GM12878 (cell line): ENCODE measurements at regions of chr2 and their contacts with region 1.

Region 1: GRCh38 chr2:119223521-119224390 is at the start of gene STEAP3:
- DNase-seq: no peak
- ATAC-seq: peak; percentile 93
- H3K4me3 ChIP-seq: peak within 1 kb of the TSS; percentile 82
- H3K27ac ChIP-seq: no peak within 1 kb of the TSS
- H3K4me1 ChIP-seq: peaks cover 3% of the 10 kb centered on the region; the same call in 1 of the 2 replicates
- H3K27me3 ChIP-seq: no peaks in the 10 kb centered on the region; a peak in 1 of 4 replicates
- CTCF ChIP-seq: peak in 1 of 3 experiments; percentile 13; a peak in 1 of 6 replicates
- EP300 ChIP-seq: no peak
- POLR2A ChIP-seq: peak; percentile 62
- RAD21 ChIP-seq: no peak
- polyA plus RNA-seq, gene STEAP3: 0.42 to 0.84 TPM

Region 2: GRCh38 chr2:119234377-119235019 is 10.7 kb after region 1 on chr2:
- CTCF ChIA-PET with region 1: interaction called, 10 read pairs
- POLR2A ChIA-PET with region 1: interaction called, 4 read pairs
- RAD21 ChIA-PET with region 1: no interaction called
- SMC1A ChIA-PET with region 1: interaction called, 7 read pairs
- in situ Hi-C with region 1: no loop called
- intact Hi-C with region 1: no loop called
- DNase-seq: no peak
- ATAC-seq: peak; percentile 37
- H3K4me3 ChIP-seq: no peak overlapping the region
- H3K27ac ChIP-seq: no peak overlapping the region
- H3K4me1 ChIP-seq: peaks cover 37% of the 10 kb centered on the region
- H3K27me3 ChIP-seq: no peaks in the 10 kb centered on the region
- CTCF ChIP-seq: peak; percentile 37 to 46 (median 45); a peak in 5 of 6 replicates
- EP300 ChIP-seq: no peak
- POLR2A ChIP-seq: no peak
- RAD21 ChIP-seq: peak; percentile 7; the same call in 1 of the 2 replicates